Aorta (tissue), 5 donors: ENCODE measurements at regions of chr15 and their contacts with region 1.

Region 1: DNA sequence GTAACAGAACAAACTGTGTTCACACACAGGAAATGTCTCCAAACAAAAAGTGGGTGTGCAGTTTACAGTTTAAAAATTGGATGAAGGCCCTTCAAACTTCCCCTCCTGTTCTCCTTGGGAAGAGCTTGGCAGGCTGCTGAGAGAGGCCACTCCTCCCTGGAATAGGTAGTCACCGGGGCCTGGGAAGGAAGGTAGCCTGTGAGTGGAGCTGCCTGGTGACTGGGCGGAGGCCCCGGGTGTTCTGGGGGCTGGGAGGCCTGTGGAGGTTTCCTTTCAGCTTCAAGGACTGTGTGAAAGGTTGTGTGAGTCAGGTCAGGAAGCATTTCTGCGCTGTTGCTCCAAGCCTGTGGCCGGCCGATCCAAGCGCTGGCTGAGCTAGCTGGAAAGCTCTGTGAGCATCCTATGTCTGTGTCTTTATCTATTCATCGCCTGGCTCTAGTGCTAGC is 14.1 kb downstream of the SLCO3A1 start:
- DNase-seq: peak; percentile 84 to 90
- ATAC-seq: peak; percentile 86
- H3K4me3 ChIP-seq: no peak overlapping the region
- H3K27ac ChIP-seq: peak overlapping the region in 1 of 2 donors; percentile 92
- H3K4me1 ChIP-seq: peaks cover 3 to 5% of the 10 kb centered on the region in 2 donors
- H3K27me3 ChIP-seq: no peaks in the 10 kb centered on the region

Region 2: GRCh38 chr15:91908391-91908790 is 40.8 kb after region 1 on chr15:
- intact Hi-C with region 1: no loop called
- DNase-seq: no peak
- ATAC-seq: no peak
- H3K4me3 ChIP-seq: no peak overlapping the region
- H3K27ac ChIP-seq: no peak overlapping the region
- H3K4me1 ChIP-seq: peaks cover 0 to 3% of the 10 kb centered on the region in 2 donors
- H3K27me3 ChIP-seq: no peaks in the 10 kb centered on the region

Region 3: DNA sequence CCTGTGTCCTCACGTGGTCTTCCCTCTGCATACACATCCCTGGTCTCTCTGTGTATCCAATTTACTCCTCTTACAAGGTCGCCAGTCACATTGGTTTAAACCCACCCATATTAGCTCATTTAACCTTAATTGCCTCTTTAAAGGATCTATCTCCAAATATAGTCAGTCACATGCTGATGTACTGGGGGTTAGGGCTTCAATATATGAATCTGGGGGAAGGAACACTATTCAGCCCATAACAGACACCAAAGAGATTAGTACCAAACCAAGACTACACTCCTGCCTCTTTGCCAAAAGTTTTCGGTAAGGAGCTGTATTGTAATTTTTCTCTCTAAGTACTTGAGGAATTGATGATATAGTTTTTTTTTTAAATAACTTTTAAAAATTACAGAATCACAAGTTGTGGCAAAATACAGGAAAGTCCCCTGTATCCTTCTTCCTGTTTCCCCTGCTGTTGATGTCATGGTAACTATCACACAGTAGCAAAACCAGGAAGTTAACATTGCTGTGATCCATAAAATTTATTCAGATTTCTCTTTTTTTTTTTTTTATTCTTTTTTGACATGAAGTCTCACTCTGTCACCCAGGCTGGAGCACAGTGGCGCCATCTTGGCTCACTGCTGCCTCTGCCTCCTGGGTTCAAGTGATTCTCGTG is 53.7 kb after region 1 on chr15:
- intact Hi-C with region 1: loop called (anchors 5 kb)
- DNase-seq: no peak
- ATAC-seq: no peak
- H3K4me3 ChIP-seq: no peak overlapping the region
- H3K27ac ChIP-seq: no peak overlapping the region
- H3K4me1 ChIP-seq: peaks cover 0 to 12% of the 10 kb centered on the region in 2 donors
- H3K27me3 ChIP-seq: no peaks in the 10 kb centered on the region

Region 4: GRCh38 chr15:91926908-91927270 is 59.3 kb after region 1 on chr15:
- intact Hi-C with region 1: loop called in 1 of 2 experiments (anchors 5 kb)
- DNase-seq: no peak
- ATAC-seq: peak; percentile 52
- H3K4me3 ChIP-seq: no peak overlapping the region
- H3K27ac ChIP-seq: peak overlapping the region; percentile 82 to 95
- H3K4me1 ChIP-seq: peaks cover 0 to 17% of the 10 kb centered on the region in 2 donors
- H3K27me3 ChIP-seq: no peaks in the 10 kb centered on the region